ENCODE measurements at regions of chr9 and their contacts with region 1.

Region 1: DNA sequence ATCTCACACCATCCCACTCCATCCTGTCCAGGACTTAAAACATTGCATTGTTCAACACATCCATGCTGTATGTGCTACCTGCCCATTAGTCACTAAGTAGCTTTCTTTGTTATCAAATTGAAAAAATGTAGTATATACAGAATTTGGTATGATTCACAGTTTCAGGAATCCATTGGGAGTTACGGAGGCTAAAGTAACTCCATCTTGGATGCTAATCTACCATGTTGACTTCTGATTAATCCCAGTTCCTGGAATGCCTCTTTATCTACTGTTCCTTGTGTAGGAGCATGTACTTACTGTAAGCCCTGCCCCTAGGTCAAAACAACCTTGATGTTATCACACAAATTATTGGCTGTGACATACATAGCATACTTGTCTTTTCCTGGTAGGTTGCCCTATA is 38.9 kb upstream of the FOXB2 start:
- DNase-seq: no peak
- ATAC-seq: no peak
- H3K4me3 ChIP-seq: no peak overlapping the region
- H3K27ac ChIP-seq: no peak overlapping the region
- H3K4me1 ChIP-seq: no peaks in the 10 kb centered on the region
- H3K27me3 ChIP-seq: no peaks in the 10 kb centered on the region

Region 2: DNA sequence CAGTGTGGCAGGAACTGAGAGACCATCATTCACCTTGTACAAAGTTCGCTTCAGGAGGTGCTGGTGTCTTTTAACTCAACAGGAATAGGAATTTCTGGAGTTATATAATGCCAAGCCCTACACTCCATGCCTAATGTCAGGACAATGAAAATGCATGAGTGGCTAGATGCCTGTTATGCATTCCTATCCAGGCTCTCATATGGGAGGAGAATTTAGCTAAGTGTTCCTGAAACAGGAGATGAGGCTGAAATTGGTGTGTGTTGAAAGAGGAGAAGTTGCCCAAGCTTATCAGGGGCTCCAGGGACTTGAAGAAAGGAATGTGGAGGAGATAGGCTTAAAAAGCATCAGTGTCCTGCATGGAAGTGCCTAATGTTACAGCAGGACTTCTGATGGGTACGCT is 47.8 kb before region 1 on chr9:
- intact Hi-C with region 1: loop called (anchors 5 to 10 kb)
- DNase-seq: no peak
- ATAC-seq: no peak
- H3K4me3 ChIP-seq: no peak overlapping the region
- H3K27ac ChIP-seq: no peak overlapping the region
- H3K4me1 ChIP-seq: no peaks in the 10 kb centered on the region
- H3K27me3 ChIP-seq: no peaks in the 10 kb centered on the region